Prostate gland (tissue), 2 donors: ENCODE measurements at regions of chr16 and their contacts with region 1.

Region 1: DNA sequence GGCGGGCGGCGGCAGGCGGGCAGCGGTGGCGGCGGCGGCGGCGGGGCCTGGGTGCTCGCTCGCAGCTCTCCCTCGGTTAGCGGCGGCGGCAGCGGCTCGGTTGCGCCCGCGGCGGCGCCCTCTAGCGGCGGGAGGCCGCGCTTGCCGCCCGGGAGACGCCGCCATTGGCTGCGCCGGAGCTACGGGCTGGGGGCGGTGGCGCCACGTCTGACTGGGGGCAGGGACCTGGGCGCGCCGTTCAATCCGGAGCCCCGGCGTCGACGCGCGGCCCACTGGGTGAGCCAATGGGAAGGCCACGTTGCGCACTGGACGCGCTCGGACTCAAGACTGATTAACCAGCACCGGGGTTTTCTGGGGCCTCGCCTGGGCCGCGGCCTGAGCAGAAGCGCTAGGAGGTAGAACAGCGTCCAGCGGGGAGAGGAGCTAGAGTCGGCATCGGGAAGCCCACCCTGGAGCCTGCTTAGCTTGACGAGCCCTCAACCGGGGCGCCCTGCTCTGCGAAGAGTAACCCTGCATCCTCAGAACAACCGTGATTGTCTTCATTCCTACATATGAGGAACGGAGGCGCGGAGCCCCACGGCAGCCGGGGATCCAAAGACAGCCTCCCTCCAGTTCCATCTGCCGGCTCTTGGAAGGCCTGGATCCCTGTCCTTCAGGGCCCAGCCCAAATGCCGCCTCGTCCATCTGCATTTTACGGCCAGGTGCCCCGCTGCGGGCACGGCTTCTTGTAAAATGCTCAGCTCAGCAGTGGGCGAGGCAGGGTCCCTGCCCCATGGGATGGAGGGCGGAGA is at the start of gene ZC3H7A:
- DNase-seq: peak; percentile 97
- H3K4me3 ChIP-seq: peak within 1 kb of the TSS; percentile 93 to 95
- H3K27ac ChIP-seq: peak within 1 kb of the TSS; percentile 98 to 99
- H3K4me1 ChIP-seq: peaks cover 30% of the 10 kb centered on the region
- H3K27me3 ChIP-seq: no peaks in the 10 kb centered on the region
- CTCF ChIP-seq: peak; percentile 73 to 99 (median 93)
- POLR2A ChIP-seq: peak; percentile 96
- total RNA-seq, gene ZC3H7A: 48.9 to 56.4 TPM

Region 2: DNA sequence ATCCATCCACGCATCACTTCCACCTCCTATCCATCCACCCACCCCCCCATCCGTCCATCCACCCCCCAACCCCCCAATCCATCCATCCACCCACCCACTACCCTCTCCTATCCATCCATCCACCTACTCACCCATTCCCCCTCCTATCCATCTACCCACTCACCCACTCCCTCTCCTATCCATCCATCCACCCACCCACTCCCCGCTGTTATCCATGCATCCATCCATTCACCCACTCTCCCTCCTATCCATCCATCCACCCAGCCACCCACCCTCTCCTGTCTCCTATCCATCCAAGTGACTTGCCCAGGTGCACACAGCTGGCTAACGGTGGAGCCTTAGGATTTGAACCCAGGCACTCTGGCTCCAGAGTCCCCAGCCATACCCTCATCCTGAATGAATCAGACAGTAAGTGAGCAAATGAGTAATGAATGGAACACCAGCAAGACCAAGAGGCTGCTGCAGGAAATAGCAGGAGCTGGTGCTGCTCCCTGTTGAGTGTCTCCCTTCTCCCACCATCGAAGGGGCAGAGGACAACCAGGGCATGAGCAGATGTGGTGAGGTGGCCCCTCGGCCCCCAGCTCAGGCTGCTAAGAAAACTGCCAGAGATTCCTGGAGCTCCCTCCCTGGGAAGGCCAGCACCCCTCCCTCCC is 273.1 kb before region 1 on chr16:
- intact Hi-C with region 1: no loop called
- DNase-seq: no peak
- H3K4me3 ChIP-seq: no peak overlapping the region
- H3K27ac ChIP-seq: no peak overlapping the region
- H3K4me1 ChIP-seq: no peaks in the 10 kb centered on the region
- H3K27me3 ChIP-seq: no peaks in the 10 kb centered on the region
- CTCF ChIP-seq: no peak
- POLR2A ChIP-seq: no peak

Region 3: DNA sequence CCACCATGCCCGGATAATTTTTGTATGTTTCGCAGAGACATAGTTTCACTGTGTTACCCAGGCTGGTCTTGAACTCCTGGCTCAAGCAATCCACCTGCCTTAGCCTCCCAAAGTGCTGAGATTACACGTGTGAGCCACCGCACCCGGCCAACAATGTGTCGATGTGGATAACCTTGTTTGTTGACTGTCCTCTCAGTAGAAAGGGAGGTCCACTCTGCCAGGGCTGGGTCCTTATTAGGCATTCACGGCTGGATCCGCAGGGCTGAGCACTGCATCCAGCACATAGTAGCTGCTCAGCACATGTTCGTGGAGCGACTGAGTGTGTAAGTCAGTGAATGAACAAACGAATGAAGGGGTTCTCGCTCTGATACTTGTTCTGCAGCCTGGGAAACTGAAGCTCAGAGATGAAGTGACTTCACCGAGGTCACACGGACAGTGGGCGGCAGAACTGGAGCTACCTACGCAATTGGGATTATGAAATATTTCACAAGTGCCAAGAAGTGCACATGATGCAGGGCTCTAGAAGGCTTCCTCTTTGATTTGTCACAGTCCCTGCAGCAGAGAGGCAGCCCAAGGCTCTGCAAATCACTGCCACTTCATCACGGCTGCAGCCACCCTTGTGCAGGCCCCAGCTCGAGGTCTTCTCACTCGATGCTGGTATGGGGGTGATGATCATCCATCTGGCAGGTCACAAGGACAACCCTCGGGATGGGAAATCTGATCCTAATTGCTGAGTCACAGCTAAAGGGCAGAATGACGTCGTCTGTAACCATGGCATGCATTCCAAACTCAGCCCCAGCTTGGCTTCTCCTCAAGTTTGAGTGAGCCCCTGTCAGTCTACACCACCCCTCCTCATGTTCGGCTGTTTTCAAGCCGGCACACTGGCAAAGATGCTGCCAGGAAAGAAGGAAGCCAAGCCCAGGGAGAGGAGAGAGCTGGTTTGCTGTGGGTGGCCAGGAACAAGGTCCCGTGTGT is 157.1 kb before region 1 on chr16:
- intact Hi-C with region 1: loop called (anchors 5 kb)
- DNase-seq: peak; percentile 86
- H3K4me3 ChIP-seq: no peak overlapping the region
- H3K27ac ChIP-seq: peak overlapping the region; percentile 76 to 91
- H3K4me1 ChIP-seq: no peaks in the 10 kb centered on the region
- H3K27me3 ChIP-seq: no peaks in the 10 kb centered on the region
- CTCF ChIP-seq: no peak
- POLR2A ChIP-seq: peak; percentile 73

Region 4: GRCh38 chr16:11667824-11668622 is 129.3 kb before region 1 on chr16 and contains the start of gene SNN:
- intact Hi-C with region 1: loop called (anchors 10 kb)
- DNase-seq: peak; percentile 86
- H3K4me3 ChIP-seq: peak within 1 kb of the TSS; percentile 88 to 89
- H3K27ac ChIP-seq: peak within 1 kb of the TSS; percentile 69 to 74
- H3K4me1 ChIP-seq: peaks cover 23% of the 10 kb centered on the region
- H3K27me3 ChIP-seq: no peaks in the 10 kb centered on the region
- CTCF ChIP-seq: no peak
- POLR2A ChIP-seq: peak; percentile 25
- total RNA-seq, gene SNN: 20.8 TPM

Region 5: GRCh38 chr16:11742539-11743307 is 54.6 kb before region 1 on chr16 and contains the start of gene TXNDC11:
- intact Hi-C with region 1: loop called (anchors 5 kb)
- DNase-seq: peak; percentile 99
- H3K4me3 ChIP-seq: peak within 1 kb of the TSS; percentile 78 to 94
- H3K27ac ChIP-seq: peak within 1 kb of the TSS; percentile 95
- H3K4me1 ChIP-seq: peaks cover 6% of the 10 kb centered on the region
- H3K27me3 ChIP-seq: no peaks in the 10 kb centered on the region
- CTCF ChIP-seq: peak in 1 of 4 experiments; percentile 5
- POLR2A ChIP-seq: peak; percentile 96
- total RNA-seq, gene TXNDC11: 75.0 to 96.9 TPM

Region 6: GRCh38 chr16:11915644-11916523 is 118.5 kb after region 1 on chr16 and contains the start of gene GSPT1:
- intact Hi-C with region 1: loop called (anchors 5 kb)
- DNase-seq: peak; percentile 98
- H3K4me3 ChIP-seq: peak within 1 kb of the TSS; percentile 90 to 94
- H3K27ac ChIP-seq: peak within 1 kb of the TSS; percentile 90 to 97
- H3K4me1 ChIP-seq: peaks cover 2% of the 10 kb centered on the region
- H3K27me3 ChIP-seq: no peaks in the 10 kb centered on the region
- CTCF ChIP-seq: peak in 2 of 4 experiments; percentile 60 to 67
- POLR2A ChIP-seq: peak; percentile 93
- total RNA-seq, gene GSPT1: 70.2 to 88.7 TPM